MCF 10A (cell line): ENCODE measurements at regions of chr1 and their contacts with region 1.

Region 1: GRCh38 chr1:185229981-185230380 is 73.0 kb downstream of the SWT1 start:
- DNase-seq: no peak
- H3K4me3 Mint-ChIP-seq: no peak overlapping the region
- H3K27ac Mint-ChIP-seq: no peak overlapping the region
- H3K4me1 Mint-ChIP-seq: no peaks in the 10 kb centered on the region
- H3K27me3 Mint-ChIP-seq: no peaks in the 10 kb centered on the region
- CTCF ChIP-seq: no peak

Region 2: GRCh38 chr1:185244015-185244747 is 14.2 kb after region 1 on chr1:
- CTCF ChIA-PET with region 1: interaction called, 14 read pairs
- POLR2A ChIA-PET with region 1: interaction called, 3 read pairs
- intact Hi-C with region 1: no loop called
- DNase-seq: peak; percentile 46
- H3K4me3 Mint-ChIP-seq: no peak overlapping the region
- H3K27ac Mint-ChIP-seq: no peak overlapping the region
- H3K4me1 Mint-ChIP-seq: peaks cover 7% of the 10 kb centered on the region
- H3K27me3 Mint-ChIP-seq: no peaks in the 10 kb centered on the region
- CTCF ChIP-seq: no peak

Region 3: DNA sequence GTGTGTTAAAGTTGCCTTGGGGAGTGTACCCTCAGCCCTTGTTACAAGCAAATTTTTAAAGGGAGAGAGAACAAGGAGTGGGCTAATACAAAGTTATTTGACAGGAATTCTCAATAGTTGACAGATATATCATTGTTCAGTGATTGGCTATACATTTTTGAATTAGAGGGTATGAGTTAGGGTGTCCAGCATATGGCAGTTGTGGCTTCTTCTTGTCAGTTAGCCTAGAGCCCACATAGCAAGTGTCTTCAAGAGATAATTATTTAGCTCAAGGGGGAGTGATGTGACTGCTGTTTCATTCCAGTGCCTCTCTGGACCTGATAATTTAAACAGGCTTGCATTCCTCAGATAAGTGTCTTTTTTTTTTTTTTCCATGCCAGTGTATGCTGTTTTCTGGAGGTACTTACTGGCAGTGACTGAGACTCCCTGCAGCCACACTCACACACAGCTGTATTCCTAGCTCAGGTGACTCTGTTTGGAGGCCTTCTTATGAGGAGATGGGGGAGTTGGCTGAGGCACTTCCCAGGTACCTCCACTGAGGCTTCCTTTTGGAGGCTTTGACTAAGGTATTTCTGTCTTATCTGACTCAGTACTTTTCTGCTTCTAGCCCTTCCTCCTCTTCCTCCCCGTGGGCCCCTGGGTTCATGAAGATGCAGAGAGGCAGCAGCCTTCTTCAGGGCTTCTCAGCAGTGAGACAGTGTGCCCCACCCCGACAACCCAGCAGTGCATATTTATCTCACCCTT is 54.7 kb after region 1 on chr1:
- CTCF ChIA-PET with region 1: interaction called, 10 read pairs
- POLR2A ChIA-PET with region 1: no interaction called
- intact Hi-C with region 1: no loop called
- DNase-seq: no peak
- H3K4me3 Mint-ChIP-seq: no peak overlapping the region
- H3K27ac Mint-ChIP-seq: no peak overlapping the region
- H3K4me1 Mint-ChIP-seq: peaks cover 2% of the 10 kb centered on the region
- H3K27me3 Mint-ChIP-seq: no peaks in the 10 kb centered on the region
- CTCF ChIP-seq: no peak